Cardiac septum (tissue), 1 donor: ENCODE measurements at regions of chr2 and their contacts with region 1.

Region 1: DNA sequence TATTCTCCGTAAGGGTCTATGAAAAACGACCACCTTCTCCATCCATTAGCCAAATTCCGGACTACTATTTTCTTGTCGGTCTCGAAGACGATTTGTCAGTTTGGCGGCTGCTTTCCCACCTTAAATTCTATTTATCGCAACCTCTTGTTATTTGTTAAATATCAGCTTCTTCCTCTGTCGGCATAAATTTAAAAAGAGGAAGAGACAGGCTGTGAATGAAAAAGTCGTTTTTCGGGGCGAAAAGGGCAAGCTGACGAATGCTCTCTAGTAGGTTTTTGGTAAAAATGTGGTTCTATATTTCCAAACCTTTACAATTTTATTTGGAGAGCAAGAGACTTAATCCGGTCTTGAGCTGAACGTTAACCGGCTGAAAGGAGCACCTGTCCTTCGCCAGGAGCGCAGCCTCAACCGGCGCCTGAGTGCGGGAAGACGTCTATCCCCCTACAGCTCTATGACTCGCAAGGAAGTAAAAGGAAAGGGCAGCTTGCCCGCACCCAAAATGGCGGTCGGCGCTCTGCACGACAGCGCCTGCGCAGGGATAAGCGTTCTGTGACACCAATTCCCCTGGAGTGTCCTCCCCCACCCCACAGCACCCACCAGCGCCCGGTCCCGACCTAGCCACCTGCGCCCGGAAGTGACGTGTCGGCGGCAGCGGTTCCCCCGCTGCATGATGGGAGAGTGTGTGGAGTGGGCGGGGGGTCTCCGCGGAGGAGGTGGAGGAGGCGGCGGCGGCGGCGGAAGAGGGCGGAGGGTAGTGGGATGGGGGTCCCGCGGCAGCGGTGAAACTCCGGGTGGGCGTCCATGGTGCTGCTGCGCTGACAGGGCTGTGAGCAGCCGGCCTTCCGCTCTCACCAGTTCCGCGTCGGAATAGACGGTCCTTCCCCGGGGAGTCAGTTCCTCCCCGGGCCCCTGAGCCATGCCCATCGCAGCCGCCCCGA is at the start of gene AFTPH:
- DNase-seq: peak; percentile 100
- total RNA-seq, gene AFTPH: 13.6 TPM

Region 2: GRCh38 chr2:64562148-64562784 is 38.3 kb after region 1 on chr2:
- intact Hi-C with region 1: loop called (anchors 2 kb)
- DNase-seq: no peak

Region 3: DNA sequence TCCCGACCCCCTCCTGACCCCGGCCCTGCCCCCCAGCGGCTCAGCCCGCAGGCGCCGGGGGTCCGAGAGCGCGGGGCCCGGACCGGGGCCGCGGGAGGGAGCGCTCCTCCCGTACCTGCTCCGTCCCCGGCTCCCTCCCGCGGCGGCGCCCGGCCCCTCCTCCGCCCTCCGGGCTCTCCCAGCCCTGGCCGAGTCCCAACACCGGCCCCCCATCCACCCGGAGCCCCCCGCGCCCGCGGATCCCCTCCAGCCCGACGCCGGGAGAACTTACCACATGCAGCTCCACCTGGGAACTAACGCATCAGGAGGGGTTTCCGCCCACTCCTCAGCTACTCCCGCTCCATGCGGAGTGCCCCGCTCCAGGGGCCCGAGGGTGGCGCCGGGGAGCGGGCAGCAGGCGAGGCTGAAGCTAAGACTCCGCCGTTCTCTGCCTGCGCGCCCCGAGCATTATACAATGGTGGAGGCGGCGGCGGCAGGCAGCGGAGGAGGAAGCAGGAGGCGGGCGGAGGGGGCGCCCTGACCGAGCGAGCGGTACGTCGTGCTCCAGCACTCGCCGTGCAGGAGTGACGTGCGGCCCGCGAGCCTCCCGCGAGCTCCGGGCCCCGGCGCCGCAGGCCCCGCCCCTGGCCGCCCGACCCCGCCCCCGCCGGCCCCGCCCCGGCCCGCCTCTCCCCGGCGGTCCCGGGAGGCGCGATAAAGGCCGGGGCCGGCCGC is 129.6 kb after region 1 on chr2 and contains the start of gene SERTAD2:
- intact Hi-C with region 1: loop called (anchors 5 kb)
- DNase-seq: peak; percentile 94
- total RNA-seq, gene SERTAD2: 22.8 TPM

Region 4: DNA sequence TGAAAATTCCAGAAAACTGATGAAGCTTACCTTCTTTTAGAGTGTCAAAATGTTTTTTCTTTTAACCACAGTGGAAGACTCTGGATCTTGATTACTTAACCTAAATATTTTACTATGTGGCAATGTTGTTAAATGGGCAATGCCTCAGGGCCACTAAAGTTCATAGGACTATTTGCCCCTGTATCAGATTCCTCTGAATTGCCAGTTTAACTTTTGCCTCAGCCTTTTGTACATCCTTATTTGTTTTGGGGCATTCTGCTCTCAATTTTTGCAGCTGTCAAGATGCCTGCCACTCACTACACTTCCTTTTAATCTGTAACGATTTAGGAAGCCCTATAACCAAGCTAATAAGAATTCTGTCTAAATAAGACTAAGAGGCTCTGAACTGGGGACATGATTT is 161.5 kb after region 1 on chr2:
- intact Hi-C with region 1: no loop called
- DNase-seq: no peak

Region 5: DNA sequence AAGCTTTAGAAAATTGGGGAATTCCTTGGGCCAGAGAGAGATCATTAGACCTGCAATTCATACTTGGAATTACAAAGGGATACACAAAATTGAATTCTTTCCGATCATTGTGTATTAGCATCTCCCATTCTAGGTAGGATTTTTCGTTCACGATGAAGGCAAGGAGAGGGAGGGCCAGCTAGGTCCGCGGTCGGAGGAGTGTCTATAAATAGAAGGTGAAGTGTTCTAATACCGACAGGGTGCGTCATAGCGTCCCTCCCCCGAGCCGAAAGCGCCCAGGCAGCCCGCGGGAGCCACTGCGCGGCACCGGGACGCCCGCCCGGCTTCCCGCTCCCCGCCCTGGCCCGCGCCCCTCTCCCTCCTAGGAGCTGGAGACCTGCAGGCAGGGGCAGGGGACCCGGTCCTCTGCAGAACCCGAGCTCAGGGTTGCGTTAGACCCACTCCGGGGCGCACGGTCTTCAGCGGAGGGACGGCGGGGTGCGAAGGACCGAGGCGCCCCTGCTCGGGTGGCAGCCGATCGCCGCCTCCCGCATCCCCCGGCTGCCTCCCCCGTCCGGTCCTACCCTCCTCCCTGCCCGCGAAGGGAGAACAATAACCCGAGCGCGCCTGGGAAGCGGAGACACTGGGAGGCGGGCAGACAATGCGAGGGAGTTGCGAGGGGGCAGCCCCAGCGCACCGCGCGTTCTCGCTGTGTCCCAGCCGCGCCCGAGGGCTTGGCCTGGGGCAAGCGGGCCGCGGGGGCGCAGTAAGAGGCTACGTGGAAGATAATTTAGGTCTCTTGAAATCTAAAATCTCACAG is 243.9 kb after region 1 on chr2:
- intact Hi-C with region 1: loop called (anchors 10 kb)
- DNase-seq: peak; percentile 94

Region 6: GRCh38 chr2:65056215-65057053 is 532.5 kb after region 1 on chr2 and contains the start of gene CEP68:
- intact Hi-C with region 1: loop called (anchors 10 kb)
- DNase-seq: peak; percentile 99
- total RNA-seq, gene CEP68: 21.6 TPM